Activated B cell treated with CpG ODN at 0.5 μM for 24 hours (primary cell): ENCODE measurements at regions of chr17 and their contacts with region 1.

Region 1: DNA sequence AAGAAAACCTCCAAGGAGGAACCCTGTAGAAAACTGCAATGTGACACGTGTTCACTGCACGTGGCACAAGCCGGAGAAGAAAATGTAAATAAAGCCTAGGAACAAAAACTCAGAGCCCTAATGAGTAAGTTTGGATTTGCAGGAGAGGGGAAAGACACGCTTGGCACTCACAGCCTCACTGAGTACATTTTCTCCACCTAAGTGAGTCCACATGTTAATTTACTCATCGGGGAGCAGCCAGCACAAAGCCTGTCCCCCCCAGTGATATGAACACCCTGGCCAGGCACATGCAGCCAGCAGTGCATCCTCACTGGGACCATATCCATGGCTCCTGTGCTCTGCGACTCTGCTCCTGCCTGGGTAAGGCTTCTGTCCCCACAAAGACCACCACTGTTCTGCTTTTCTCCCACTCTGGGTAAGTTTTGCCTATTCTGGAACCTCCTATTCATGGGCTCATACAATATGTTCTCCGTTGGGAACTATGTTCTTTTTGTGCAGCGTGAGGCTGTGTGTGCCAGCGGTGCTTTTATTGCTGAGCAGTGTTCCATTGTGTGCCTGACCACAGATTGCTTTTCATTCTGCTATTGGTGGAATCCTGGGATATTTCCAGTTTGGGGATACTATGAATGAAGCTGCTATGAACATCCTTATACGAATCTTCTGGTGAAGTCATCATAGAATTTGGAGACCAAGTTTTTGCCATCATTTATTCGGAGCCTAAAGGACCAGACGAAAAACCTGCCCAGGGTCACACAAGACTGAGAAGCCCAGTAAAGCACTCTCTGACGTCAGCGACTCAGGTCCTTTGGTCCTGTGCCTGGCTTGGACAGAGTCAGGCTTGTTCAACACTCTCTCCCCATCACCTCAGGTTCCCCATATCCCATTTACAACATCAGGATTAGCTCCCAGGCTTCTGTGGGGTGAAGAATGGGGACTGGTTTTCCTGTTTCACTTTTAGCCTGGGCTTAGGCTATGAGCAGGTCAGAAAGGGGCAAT is 53.3 kb downstream of the RNF112 start:
- DNase-seq: no peak
- ATAC-seq: no peak
- H3K4me3 Mint-ChIP-seq: peak overlapping the region; percentile 36
- H3K27ac Mint-ChIP-seq: peak overlapping the region; percentile 92
- H3K4me1 Mint-ChIP-seq: peaks cover 49% of the 10 kb centered on the region
- H3K27me3 Mint-ChIP-seq: no peaks in the 10 kb centered on the region
- CTCF ChIP-seq: no peak

Region 2: GRCh38 chr17:19317359-19318095 is 146.8 kb before region 1 on chr17:
- CTCF ChIA-PET with region 1: no interaction called
- POLR2A ChIA-PET with region 1: no interaction called
- intact Hi-C with region 1: no loop called
- DNase-seq: no peak
- ATAC-seq: peak; percentile 96
- H3K4me3 Mint-ChIP-seq: no peak overlapping the region
- H3K27ac Mint-ChIP-seq: no peak overlapping the region
- H3K4me1 Mint-ChIP-seq: peaks cover 6% of the 10 kb centered on the region
- H3K27me3 Mint-ChIP-seq: peaks cover 2% of the 10 kb centered on the region
- CTCF ChIP-seq: no peak

Region 3: DNA sequence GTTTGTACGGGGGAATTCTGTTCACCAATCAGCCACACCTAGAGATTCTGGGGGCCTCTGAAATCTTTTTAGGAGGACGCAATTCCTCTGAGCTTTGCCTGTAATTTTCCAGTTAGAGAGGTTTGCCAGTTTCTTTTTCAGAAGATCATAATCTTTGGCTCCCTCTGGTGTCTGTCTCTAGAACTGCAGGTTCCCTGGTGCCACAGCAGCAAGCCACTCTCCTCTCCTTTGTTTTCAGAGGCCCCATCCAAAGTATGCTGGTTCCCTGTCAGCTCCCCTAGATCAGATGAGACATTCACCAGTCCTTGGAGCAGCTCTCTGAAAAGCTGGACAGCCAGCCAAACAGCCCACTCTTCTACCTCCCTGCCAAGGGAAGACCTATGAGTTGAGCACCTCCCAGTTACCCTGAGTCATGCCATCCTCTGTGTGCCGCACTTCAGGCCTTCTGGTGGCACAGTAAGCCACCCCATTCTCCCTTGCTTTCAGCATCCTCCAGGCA is 17.2 kb before region 1 on chr17:
- CTCF ChIA-PET with region 1: interaction called, 24 read pairs
- POLR2A ChIA-PET with region 1: no interaction called
- intact Hi-C with region 1: no loop called
- DNase-seq: no peak
- ATAC-seq: peak; percentile 65
- H3K4me3 Mint-ChIP-seq: no peak overlapping the region
- H3K27ac Mint-ChIP-seq: no peak overlapping the region
- H3K4me1 Mint-ChIP-seq: peaks cover 5% of the 10 kb centered on the region
- H3K27me3 Mint-ChIP-seq: peaks cover 17% of the 10 kb centered on the region
- CTCF ChIP-seq: peak; percentile 63

Region 4: GRCh38 chr17:19507775-19508576 is 43.6 kb after region 1 on chr17:
- CTCF ChIA-PET with region 1: no interaction called
- POLR2A ChIA-PET with region 1: no interaction called
- intact Hi-C with region 1: loop called (anchors 2 kb)
- DNase-seq: peak; percentile 83
- ATAC-seq: peak; percentile 80
- H3K4me3 Mint-ChIP-seq: peak overlapping the region; percentile 92
- H3K27ac Mint-ChIP-seq: peak overlapping the region; percentile 94
- H3K4me1 Mint-ChIP-seq: peaks cover 11% of the 10 kb centered on the region
- H3K27me3 Mint-ChIP-seq: peaks cover 2% of the 10 kb centered on the region
- CTCF ChIP-seq: no peak